CD8-positive, alpha-beta T cell (primary cell): ENCODE measurements at regions of chr17 and their contacts with region 1.

Region 1: GRCh38 chr17:7834962-7835813 is 1.2 kb downstream of the KDM6B start:
- DNase-seq: peak; percentile 75 to 98 (median 85)
- ATAC-seq: peak; percentile 54
- H3K4me3 ChIP-seq: peak overlapping the region; percentile 90 to 97
- H3K4me3 Mint-ChIP-seq: peak overlapping the region; percentile 96
- H3K27ac ChIP-seq: peak overlapping the region; percentile 99
- H3K27ac Mint-ChIP-seq: peak overlapping the region; percentile 99
- H3K4me1 ChIP-seq: peaks cover 45% of the 10 kb centered on the region
- H3K4me1 Mint-ChIP-seq: peaks cover 45% of the 10 kb centered on the region
- H3K27me3 ChIP-seq: no peaks in the 10 kb centered on the region
- H3K27me3 Mint-ChIP-seq: no peaks in the 10 kb centered on the region
- CTCF ChIP-seq: peak; percentile 69

Region 2: GRCh38 chr17:7823581-7824397 is 11.4 kb before region 1 on chr17:
- CTCF ChIA-PET with region 1: interaction called, 16 read pairs
- POLR2A ChIA-PET with region 1: no interaction called
- intact Hi-C with region 1: loop called in 1 of 2 experiments (anchors 1 kb)
- DNase-seq: no peak
- ATAC-seq: no peak
- H3K4me3 ChIP-seq: no peak overlapping the region
- H3K4me3 Mint-ChIP-seq: no peak overlapping the region
- H3K27ac ChIP-seq: no peak overlapping the region
- H3K27ac Mint-ChIP-seq: no peak overlapping the region
- H3K4me1 ChIP-seq: no peaks in the 10 kb centered on the region
- H3K4me1 Mint-ChIP-seq: no peaks in the 10 kb centered on the region
- H3K27me3 ChIP-seq: no peaks in the 10 kb centered on the region
- H3K27me3 Mint-ChIP-seq: no peaks in the 10 kb centered on the region
- CTCF ChIP-seq: no peak

Region 3: GRCh38 chr17:7851438-7852256 is 16.5 kb after region 1 on chr17:
- CTCF ChIA-PET with region 1: interaction called, 57 read pairs
- POLR2A ChIA-PET with region 1: interaction called, 37 read pairs
- intact Hi-C with region 1: loop called (anchors 1 kb)
- DNase-seq: peak; percentile 90 to 98 (median 96)
- ATAC-seq: peak; percentile 84
- H3K4me3 ChIP-seq: peak overlapping the region; percentile 44 to 58
- H3K4me3 Mint-ChIP-seq: peak overlapping the region; percentile 68
- H3K27ac ChIP-seq: peak overlapping the region; percentile 53 to 54
- H3K27ac Mint-ChIP-seq: peak overlapping the region; percentile 91
- H3K4me1 ChIP-seq: peaks cover 27% of the 10 kb centered on the region
- H3K4me1 Mint-ChIP-seq: peaks cover 22% of the 10 kb centered on the region
- H3K27me3 ChIP-seq: no peaks in the 10 kb centered on the region
- H3K27me3 Mint-ChIP-seq: no peaks in the 10 kb centered on the region
- CTCF ChIP-seq: peak; percentile 97

Region 4: DNA sequence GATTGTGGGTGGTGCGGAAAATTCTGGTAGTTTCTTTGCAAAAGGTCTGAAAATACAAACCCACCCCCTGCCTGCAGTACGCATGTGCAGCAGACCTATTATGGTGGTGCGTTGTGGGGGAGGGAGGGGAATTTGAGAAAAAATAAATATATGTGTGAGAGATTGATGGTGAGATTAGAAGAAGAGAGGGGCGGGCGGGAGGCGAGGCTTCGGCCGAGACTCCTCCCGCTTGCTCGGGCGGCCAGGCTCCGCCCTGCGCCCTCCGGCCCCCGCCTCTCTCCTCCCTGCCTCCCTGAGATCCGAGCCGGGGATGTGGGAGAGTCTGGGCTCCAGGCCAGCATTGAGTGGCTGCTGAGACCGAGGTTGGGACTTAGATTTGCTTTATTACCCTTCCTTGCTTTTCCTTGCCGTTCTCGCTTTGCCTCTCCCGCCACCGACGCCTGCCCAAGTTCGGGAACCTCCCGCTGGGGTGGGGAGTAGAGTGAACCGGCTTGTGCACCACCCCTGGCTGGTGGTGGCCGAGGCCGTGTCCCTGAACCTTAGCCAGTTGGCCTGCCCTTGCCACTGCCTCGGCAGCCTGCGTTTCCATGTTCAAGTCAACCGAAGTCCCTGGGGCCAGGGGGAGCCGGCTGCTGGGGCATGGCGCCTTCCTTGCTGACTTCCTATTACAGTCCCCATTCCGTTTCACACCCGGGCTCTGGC is 52.4 kb after region 1 on chr17:
- CTCF ChIA-PET with region 1: no interaction called
- POLR2A ChIA-PET with region 1: interaction called, 3 read pairs
- intact Hi-C with region 1: loop called (anchors 1 kb)
- DNase-seq: peak; percentile 73 to 97 (median 87)
- ATAC-seq: peak; percentile 71
- H3K4me3 ChIP-seq: peak overlapping the region; percentile 86 to 89
- H3K4me3 Mint-ChIP-seq: no peak overlapping the region
- H3K27ac ChIP-seq: peak overlapping the region; percentile 61 to 80
- H3K27ac Mint-ChIP-seq: no peak overlapping the region
- H3K4me1 ChIP-seq: peaks cover 30% of the 10 kb centered on the region
- H3K4me1 Mint-ChIP-seq: peaks cover 13% of the 10 kb centered on the region
- H3K27me3 ChIP-seq: no peaks in the 10 kb centered on the region
- H3K27me3 Mint-ChIP-seq: no peaks in the 10 kb centered on the region
- CTCF ChIP-seq: no peak

Region 5: DNA sequence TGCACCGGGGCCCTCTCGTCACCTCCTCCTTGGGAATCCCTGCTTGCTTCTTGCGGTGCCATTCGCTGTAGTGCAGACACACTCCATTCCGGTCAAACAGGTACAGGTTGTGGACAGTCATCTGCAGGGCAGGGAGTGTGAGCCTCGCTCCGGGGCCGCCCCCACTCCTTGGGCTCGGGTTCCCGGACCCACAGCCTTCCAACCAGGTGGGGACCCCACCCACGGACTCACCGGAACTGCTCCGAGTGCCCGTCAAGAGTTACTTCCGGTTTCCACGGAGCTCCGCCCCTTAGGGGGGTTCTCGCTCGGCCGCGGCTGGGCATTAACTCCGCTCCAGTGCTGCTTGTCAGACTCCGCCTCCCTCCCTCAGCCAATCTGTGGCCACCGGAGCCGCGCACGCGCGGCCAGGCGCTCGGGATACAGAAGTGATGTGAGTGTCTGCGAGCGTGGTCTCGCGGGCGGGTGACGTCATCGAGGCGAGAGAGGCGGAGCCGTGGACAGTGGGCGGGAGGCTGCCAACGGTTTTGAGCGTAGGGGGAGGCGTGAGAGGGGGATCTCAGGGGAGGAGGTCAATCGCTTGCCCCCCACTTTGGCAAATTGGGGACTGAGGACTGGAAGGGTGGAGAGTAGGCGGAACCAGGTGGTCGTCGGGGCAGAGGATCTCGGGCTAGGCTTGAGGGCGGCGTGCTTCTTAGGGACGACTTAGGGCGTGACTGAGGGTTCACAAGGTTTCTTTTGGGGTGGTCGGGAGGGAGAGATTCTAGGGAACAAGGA is 96.7 kb after region 1 on chr17 and contains the starts of genes CNTROB and TRAPPC1:
- CTCF ChIA-PET with region 1: no interaction called
- POLR2A ChIA-PET with region 1: interaction called, 3 read pairs
- intact Hi-C with region 1: loop called (anchors 1 to 2 kb)
- DNase-seq: peak; percentile 99 to 100 (median 99)
- ATAC-seq: peak; percentile 93
- H3K4me3 ChIP-seq: peak within 1 kb of the TSS; percentile 96
- H3K4me3 Mint-ChIP-seq: peak within 1 kb of the TSS; percentile 100
- H3K27ac ChIP-seq: peak within 1 kb of the TSS; percentile 85
- H3K27ac Mint-ChIP-seq: peak within 1 kb of the TSS; percentile 99
- H3K4me1 ChIP-seq: peaks cover 22% of the 10 kb centered on the region
- H3K4me1 Mint-ChIP-seq: peaks cover 50% of the 10 kb centered on the region
- H3K27me3 ChIP-seq: no peaks in the 10 kb centered on the region
- H3K27me3 Mint-ChIP-seq: no peaks in the 10 kb centered on the region
- CTCF ChIP-seq: no peak
- total RNA-seq, gene CNTROB: 20.1 to 23.6 TPM
- total RNA-seq, gene TRAPPC1: 29.6 to 39.4 TPM

Region 6: GRCh38 chr17:8156246-8156992 is 321.2 kb after region 1 on chr17:
- CTCF ChIA-PET with region 1: no interaction called
- POLR2A ChIA-PET with region 1: no interaction called
- intact Hi-C with region 1: loop called (anchors 1 to 5 kb)
- DNase-seq: peak; percentile 100
- ATAC-seq: peak; percentile 68
- H3K4me3 ChIP-seq: peak overlapping the region; percentile 82 to 90
- H3K4me3 Mint-ChIP-seq: no peak overlapping the region
- H3K27ac ChIP-seq: peak overlapping the region; percentile 100
- H3K27ac Mint-ChIP-seq: no peak overlapping the region
- H3K4me1 ChIP-seq: peaks cover 77% of the 10 kb centered on the region
- H3K4me1 Mint-ChIP-seq: peaks cover 68% of the 10 kb centered on the region
- H3K27me3 ChIP-seq: no peaks in the 10 kb centered on the region
- H3K27me3 Mint-ChIP-seq: no peaks in the 10 kb centered on the region
- CTCF ChIP-seq: no peak